ENCODE measurements at regions of chr5 and their contacts with region 1.

Region 1: DNA sequence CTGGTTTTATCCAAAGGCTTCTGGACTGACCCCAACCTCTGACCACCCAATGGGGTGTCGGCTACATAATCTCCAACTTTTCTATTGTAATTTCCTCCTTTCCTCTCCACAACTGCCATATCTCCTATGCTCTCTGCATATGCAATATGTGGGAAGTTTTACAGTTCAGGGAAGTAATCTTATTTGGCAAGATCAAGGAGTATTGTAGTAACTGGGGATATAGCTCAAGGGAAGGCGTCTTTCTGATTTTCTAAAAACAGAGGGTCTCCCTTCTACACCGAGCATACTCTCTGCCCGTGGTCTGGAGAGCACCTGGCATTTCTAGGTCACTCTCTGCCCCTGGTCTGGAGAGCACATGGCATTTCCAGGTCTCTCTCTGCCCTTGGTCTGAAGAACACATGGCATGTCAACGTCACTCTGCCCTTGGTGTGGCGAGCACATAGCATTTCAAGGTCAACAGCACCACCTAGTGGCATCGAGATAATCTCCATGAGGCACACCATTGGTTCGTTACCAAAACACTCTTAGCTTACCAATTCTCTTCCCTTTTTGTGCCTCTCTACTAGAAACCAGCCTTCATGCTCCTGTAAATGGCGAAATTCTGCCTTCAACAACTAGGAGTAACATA is 616.4 kb upstream of the NUDT12 start:
- DNase-seq: peak; percentile 29
- ATAC-seq: peak; percentile 50 to 53

Region 2: DNA sequence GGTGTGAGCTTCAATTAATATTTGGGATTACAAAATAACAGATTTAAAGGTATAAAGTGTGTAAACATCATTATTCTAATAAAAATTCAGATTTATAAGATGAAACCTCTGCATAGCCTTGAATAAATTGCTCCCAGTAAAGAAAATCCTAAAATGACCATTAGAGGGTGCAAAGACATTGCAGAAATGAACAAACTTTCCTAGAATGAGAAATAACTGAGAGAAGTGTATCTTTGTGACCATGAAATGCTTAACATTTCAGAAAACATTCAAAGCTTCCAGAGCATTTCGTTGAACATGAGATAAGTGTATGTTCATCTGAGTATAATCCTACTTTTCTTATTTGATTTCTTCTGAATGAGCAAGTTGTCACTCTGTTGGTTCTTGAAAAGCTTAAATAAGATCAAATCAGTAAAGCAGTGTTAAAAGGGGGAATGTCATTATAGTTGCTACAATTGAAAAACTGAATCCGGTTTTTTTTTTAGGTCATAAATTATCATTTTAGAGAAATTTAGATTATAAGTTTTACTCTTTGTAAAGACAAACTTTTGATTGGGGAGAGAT is 591.7 kb before region 1 on chr5:
- intact Hi-C with region 1: loop called in 1 of 2 experiments (anchors 5 kb)
- DNase-seq: no peak
- ATAC-seq: no peak

Region 3: DNA sequence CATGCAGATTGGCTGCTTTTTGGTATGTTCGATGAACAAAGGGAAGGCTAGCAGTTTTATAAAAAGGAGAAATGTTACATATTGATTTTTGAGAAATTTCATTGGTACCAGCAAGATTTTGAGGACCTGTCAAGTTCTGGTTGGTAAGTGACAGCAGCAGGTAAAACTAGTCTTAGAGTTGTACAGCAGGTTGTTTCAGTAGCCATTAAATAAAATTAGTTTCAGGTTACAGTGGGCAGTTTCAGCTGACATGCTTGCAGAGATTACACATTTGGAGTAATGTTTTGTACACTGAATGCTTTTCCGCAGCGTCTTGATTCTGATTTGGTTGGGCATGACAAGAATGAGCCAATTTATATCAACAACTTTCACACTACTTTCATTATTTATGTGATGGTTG is 167.2 kb before region 1 on chr5:
- intact Hi-C with region 1: no loop called
- DNase-seq: no peak
- ATAC-seq: no peak

Measured in left cardiac atrium (tissue), 4 donors.